ENCODE measurements at regions of chr19 and their contacts with region 1.

Region 1: DNA sequence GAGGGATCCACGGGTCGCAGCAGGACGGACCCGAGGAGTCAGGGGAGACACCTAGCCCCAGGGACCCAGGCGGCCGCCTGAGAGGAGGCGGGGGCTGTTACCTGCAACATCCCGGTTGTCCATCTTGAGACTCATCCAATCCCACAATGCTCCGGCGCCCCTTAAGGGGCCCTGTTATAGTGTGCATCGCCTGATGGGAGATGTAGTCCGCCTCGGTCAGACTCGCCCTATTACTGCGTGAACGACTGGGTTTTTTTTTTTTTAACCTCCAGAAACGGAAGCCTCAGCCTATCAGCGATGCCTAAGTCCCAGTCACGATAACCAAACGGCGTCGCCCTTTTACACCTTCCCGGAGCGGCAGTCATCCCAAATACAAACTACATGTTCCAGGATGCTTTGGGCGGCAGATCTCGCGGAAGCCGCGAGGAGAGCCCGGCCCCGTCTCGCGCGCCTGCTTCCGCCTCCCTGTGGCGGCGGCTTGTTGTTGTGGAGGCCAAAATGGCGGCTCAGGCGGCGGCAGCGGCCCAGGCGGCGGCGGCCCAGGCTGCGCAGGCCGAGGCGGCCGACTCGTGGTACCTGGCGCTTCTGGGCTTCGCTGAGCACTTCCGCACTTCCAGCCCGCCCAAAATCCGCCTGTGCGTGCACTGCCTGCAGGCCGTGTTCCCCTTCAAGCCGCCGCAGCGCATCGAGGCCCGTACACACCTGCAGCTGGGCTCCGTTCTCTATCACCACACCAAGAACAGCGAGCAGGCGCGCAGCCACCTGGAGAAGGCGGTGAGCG is at the starts of genes MAU2 and SUGP1:
- DNase-seq: peak; percentile 78 to 94 (median 91)
- ATAC-seq: peak; percentile 94
- H3K4me3 ChIP-seq: peak within 1 kb of the TSS; percentile 89
- H3K4me3 Mint-ChIP-seq: peak within 1 kb of the TSS; percentile 93 to 100 (median 98)
- H3K27ac ChIP-seq: peak within 1 kb of the TSS; percentile 95
- H3K27ac Mint-ChIP-seq: peak within 1 kb of the TSS; percentile 96 to 100 (median 99)
- H3K4me1 ChIP-seq: peaks cover 23 to 30% of the 10 kb centered on the region in 2 donors
- H3K4me1 Mint-ChIP-seq: peaks cover 20 to 66% (median 44%) of the 10 kb centered on the region in 7 donors
- H3K27me3 ChIP-seq: no peaks in the 10 kb centered on the region
- H3K27me3 Mint-ChIP-seq: no peaks in the 10 kb centered on the region
- total RNA-seq, gene MAU2: 93.7 to 170 (median 136) TPM
- total RNA-seq, gene SUGP1: 59.7 to 96.6 (median 77.5) TPM

Region 2: DNA sequence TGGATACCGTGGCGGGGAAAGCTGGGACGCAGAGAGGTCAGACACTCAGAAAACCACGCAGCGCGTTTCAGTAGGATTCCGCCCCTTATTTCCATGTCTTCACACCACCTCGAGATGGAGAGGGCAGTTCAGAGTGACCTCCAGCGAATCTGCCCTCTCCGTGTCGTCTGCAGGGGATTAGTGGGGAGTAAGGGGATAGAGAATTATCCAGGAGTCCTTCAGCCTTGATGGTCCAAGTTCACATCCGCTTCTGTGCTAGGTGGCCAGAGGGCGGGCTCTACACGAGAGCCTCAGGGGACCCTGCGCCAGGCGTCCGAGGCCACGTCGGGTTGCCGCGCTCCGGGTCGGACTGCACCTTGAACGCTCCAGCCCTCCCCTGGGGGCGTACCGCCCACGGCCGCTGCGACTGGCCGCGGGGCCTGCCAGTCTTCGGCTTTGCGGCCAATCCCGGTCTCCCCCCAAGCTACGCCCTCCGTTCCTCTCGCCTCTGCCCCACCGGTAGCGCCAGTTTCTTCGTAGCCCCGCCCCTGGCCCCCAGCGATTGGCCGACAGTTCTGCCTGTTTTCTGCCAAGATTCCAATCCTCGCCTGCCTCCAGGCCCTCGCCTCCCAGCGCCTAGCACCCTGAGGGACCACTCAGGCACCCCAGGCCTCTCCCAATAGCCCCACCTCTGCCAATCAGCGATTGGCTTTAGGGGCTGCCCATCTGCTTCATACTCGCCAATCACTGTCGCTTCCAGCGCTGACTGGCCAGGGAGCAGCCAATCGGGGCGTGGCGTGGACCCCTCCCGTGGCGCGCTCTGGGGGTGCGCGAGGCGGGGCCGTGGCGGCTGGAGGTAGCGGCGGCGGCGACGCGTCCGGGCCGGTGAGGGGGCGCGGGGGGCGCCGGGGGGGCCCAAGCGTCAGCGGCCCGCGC is 257.1 kb before region 1 on chr19 and contains the start of gene SLC25A42:
- CTCF ChIA-PET with region 1: no interaction called
- POLR2A ChIA-PET with region 1: no interaction called
- intact Hi-C with region 1: loop called (anchors 1 kb)
- DNase-seq: peak; percentile 93 to 100 (median 99)
- ATAC-seq: peak; percentile 95
- H3K4me3 ChIP-seq: peak within 1 kb of the TSS; percentile 82
- H3K4me3 Mint-ChIP-seq: peak within 1 kb of the TSS; percentile 83 to 99 (median 92)
- H3K27ac ChIP-seq: peak within 1 kb of the TSS; percentile 83
- H3K27ac Mint-ChIP-seq: peak within 1 kb of the TSS; percentile 75 to 98 (median 83)
- H3K4me1 ChIP-seq: peaks cover 11 to 15% of the 10 kb centered on the region in 2 donors
- H3K4me1 Mint-ChIP-seq: peaks cover 5 to 41% (median 35%) of the 10 kb centered on the region in 7 donors
- H3K27me3 ChIP-seq: no peaks in the 10 kb centered on the region
- H3K27me3 Mint-ChIP-seq: no peaks in the 10 kb centered on the region
- total RNA-seq, gene SLC25A42: 19.0 to 36.1 (median 21.6) TPM

Region 3: DNA sequence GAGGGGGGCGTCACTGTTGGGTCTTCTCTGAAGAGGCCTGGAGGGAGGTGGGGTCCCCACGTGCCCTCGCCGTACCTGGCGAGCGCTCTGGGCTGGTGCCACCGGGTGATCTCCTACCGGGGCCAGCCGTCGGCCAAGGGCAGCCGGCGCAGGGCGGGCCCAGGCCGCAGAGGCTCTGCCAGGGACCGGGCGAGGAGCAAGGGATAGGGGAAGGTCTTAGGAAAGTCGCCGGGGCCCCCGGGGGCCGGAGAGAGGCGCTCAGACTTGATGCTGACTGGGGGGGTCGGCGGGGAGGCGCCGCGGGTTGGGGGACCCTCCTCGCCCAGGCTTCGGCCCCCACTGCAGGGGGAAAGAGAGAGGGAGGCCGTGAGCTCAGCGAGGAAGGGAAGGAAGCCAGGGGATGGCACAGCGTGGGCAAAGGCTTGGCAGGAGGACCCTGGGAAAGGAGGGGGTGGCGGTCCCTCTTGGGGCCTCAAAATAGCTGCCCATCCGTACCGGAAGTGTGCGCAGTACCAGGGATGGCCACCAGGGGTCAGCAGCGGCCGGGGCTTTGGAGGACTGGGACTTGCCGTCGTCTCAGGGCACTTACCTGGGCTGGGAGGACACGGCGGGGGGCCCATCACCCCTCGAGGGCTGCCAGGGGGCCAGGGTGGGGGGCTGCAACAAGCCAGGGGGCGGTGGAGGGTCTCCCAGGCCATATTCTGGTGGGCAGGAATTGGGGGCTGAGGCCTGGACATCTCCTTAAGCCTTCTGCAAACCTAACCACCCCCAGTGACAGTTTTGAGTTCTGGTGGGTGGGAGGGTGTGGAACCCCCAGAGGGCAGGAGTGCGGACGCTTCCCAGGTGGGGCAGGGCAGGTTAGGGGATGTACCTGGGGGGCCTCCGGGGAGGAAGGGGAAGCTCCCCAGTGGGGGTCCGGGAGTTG is 174.6 kb before region 1 on chr19:
- CTCF ChIA-PET with region 1: no interaction called
- POLR2A ChIA-PET with region 1: no interaction called
- intact Hi-C with region 1: loop called in 1 of 2 experiments (anchors 1 kb)
- DNase-seq: peak; percentile 68 to 93 (median 80)
- ATAC-seq: peak; percentile 96
- H3K4me3 ChIP-seq: no peak overlapping the region
- H3K4me3 Mint-ChIP-seq: no peak overlapping the region
- H3K27ac ChIP-seq: no peak overlapping the region
- H3K27ac Mint-ChIP-seq: no peak overlapping the region
- H3K4me1 ChIP-seq: no peaks in the 10 kb centered on the region
- H3K4me1 Mint-ChIP-seq: no peaks in the 10 kb centered on the region
- H3K27me3 ChIP-seq: no peaks in the 10 kb centered on the region
- H3K27me3 Mint-ChIP-seq: no peaks in the 10 kb centered on the region

Region 4: DNA sequence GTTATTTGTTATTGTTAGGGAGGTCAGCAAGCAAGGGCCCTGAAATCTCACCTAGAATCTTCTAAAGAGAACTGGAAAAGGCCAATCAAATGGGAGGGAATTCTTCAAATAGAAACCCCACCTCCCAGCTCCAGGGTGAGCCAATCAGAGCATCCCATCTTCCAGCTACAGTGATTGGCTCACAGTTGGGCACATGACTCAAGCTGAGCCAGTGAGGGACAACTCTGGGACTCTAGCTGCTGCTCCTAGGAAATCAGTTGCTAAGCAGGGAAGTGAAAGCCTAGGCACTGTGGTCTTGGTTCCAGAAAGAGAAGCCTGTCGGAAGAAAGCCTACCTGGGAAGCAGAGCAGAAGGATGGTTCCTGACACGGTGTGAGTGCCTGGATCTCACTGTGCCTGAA is 60.8 kb before region 1 on chr19:
- CTCF ChIA-PET with region 1: no interaction called
- POLR2A ChIA-PET with region 1: no interaction called
- intact Hi-C with region 1: no loop called
- DNase-seq: no peak
- ATAC-seq: no peak
- H3K4me3 ChIP-seq: no peak overlapping the region
- H3K4me3 Mint-ChIP-seq: peak overlapping the region in 2 of 10 donors; percentile 8 to 12
- H3K27ac ChIP-seq: no peak overlapping the region
- H3K27ac Mint-ChIP-seq: no peak overlapping the region
- H3K4me1 ChIP-seq: no peaks in the 10 kb centered on the region
- H3K4me1 Mint-ChIP-seq: peaks cover 4 to 12% (median 9%) of the 10 kb centered on the region in 7 donors
- H3K27me3 ChIP-seq: peaks cover 6% of the 10 kb centered on the region in 2 donors
- H3K27me3 Mint-ChIP-seq: peaks cover 47 to 63% (median 51%) of the 10 kb centered on the region in 5 donors

Region 5: DNA sequence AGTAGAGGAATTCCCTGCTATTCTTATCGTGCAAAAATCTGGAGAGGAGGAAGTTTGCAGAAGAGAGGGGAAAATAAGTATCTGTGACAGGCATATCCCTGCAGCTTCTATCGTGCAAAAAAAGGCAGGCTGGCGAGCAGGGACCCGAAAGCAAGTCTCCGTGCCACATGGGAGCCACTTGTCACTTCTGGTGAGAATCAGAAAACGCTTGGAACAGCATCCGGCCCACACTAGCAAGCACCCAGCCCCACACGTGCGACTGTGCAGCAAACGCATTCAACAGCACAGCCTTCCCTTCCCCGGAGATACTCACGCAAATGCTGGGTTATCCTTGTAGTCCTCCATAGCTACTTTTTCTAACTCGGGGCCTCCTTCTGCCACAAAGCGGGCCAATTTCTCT is 17.1 kb before region 1 on chr19:
- CTCF ChIA-PET with region 1: no interaction called
- POLR2A ChIA-PET with region 1: no interaction called
- intact Hi-C with region 1: no loop called
- DNase-seq: no peak
- ATAC-seq: no peak
- H3K4me3 ChIP-seq: no peak overlapping the region
- H3K4me3 Mint-ChIP-seq: no peak overlapping the region
- H3K27ac ChIP-seq: no peak overlapping the region
- H3K27ac Mint-ChIP-seq: no peak overlapping the region
- H3K4me1 ChIP-seq: no peaks in the 10 kb centered on the region
- H3K4me1 Mint-ChIP-seq: no peaks in the 10 kb centered on the region
- H3K27me3 ChIP-seq: no peaks in the 10 kb centered on the region
- H3K27me3 Mint-ChIP-seq: no peaks in the 10 kb centered on the region

Region 6: DNA sequence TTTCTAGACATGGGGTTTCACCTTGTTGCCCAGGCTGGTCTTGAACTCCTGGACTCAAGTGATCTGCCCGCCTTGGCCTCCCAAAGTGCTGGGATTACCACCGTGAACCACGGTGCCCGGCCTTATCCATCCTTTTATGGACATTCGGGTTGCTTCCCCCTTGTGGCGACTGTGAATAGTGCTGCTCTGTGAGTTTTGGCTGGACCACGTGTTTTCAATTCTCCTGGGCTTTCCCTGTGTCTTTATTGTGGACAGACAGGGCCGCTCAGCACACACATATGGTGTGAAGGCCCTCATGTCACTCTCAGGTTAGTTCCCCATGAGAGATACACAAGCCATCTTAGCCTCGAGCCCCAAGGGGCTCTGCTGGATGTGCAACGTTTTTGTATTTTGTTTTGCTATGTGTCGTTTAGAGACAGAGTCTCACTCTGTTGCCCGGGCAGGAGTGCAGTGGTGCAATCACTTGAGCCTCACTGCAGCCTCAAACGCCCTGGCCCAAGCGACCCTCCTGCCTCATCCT is 40.6 kb after region 1 on chr19:
- CTCF ChIA-PET with region 1: interaction called, 3 read pairs
- POLR2A ChIA-PET with region 1: interaction called, 5 read pairs
- intact Hi-C with region 1: loop called (anchors 1 to 2 kb)
- DNase-seq: peak; percentile 40 to 70 (median 57)
- ATAC-seq: peak; percentile 79
- H3K4me3 ChIP-seq: no peak overlapping the region
- H3K4me3 Mint-ChIP-seq: peak overlapping the region in 8 of 10 donors; percentile 7 to 73 (median 54)
- H3K27ac ChIP-seq: no peak overlapping the region
- H3K27ac Mint-ChIP-seq: peak overlapping the region in 8 of 9 donors; percentile 5 to 78 (median 68)
- H3K4me1 ChIP-seq: peaks cover 15 to 21% of the 10 kb centered on the region in 2 donors
- H3K4me1 Mint-ChIP-seq: peaks cover 18 to 51% (median 35%) of the 10 kb centered on the region in 7 donors
- H3K27me3 ChIP-seq: no peaks in the 10 kb centered on the region
- H3K27me3 Mint-ChIP-seq: no peaks in the 10 kb centered on the region

Region 7: DNA sequence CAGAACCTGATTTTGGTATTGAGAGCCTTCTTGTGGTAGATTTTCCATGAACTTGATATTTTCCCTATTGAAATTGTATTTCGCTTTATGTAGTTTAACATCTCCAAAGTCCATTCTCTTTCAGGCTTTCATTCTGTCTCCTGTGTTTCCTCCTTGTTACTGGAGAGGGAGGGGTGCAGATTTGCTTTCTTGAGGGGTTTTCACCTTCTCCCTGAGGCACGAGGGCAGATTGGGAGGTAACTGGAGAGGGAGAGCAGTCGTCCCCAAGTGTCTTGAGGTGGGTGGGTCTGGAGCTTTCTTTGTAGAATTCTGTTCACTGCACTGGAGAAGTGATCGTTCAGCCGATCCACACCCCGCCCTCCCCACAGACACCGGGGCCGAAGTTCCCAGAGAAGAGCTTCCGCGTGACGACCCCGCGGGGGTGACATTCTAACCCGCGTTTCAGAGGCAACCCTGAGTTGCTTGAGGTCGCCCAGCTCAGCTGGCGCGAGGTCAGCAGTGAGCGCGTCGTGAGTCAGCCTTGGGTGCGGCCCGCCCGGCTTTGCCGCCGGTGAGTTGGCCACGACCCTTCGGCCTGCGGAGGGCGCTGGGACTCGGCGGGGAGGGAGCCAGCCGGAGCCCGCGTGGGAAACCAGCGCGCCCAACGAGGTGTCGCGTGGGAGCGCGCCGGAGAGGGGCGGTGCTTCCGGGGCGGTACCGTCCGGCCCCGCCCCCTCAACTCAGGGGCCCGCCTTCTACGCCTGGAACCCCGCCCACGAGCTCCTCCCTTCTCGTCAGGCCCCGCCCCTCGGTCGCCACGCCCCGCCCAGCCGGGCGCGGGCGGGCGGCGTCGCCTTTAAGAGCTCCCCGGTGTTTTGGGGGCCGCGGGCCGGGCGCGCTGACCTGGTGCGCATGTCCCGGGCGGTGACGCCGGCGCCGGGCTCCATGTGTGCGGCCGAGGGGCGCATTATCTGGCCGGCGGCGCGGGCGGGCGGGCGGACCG is 84.6 kb after region 1 on chr19 and contains the start of gene GATAD2A:
- CTCF ChIA-PET with region 1: no interaction called
- POLR2A ChIA-PET with region 1: interaction called, 3 read pairs
- intact Hi-C with region 1: loop called (anchors 1 kb)
- DNase-seq: peak; percentile 85 to 99 (median 90)
- ATAC-seq: peak; percentile 96
- H3K4me3 ChIP-seq: peak within 1 kb of the TSS; percentile 65
- H3K4me3 Mint-ChIP-seq: peak within 1 kb of the TSS; percentile 89 to 97 (median 94)
- H3K27ac ChIP-seq: peak within 1 kb of the TSS; percentile 86
- H3K27ac Mint-ChIP-seq: peak within 1 kb of the TSS; percentile 86 to 98 (median 92)
- H3K4me1 ChIP-seq: peaks cover 26 to 38% of the 10 kb centered on the region in 2 donors
- H3K4me1 Mint-ChIP-seq: peaks cover 37 to 70% (median 66%) of the 10 kb centered on the region in 7 donors
- H3K27me3 ChIP-seq: no peaks in the 10 kb centered on the region
- H3K27me3 Mint-ChIP-seq: no peaks in the 10 kb centered on the region
- total RNA-seq, gene GATAD2A: 97.9 to 123 (median 116) TPM

Region 8: GRCh38 chr19:19515764-19516519 is 195.4 kb after region 1 on chr19 and contains the start of gene NDUFA13:
- CTCF ChIA-PET with region 1: no interaction called
- POLR2A ChIA-PET with region 1: no interaction called
- intact Hi-C with region 1: loop called (anchors 1 kb)
- DNase-seq: peak; percentile 88 to 98 (median 92)
- ATAC-seq: peak; percentile 96
- H3K4me3 ChIP-seq: peak within 1 kb of the TSS; percentile 96
- H3K4me3 Mint-ChIP-seq: peak within 1 kb of the TSS; percentile 89 to 98 (median 95)
- H3K27ac ChIP-seq: peak within 1 kb of the TSS; percentile 83
- H3K27ac Mint-ChIP-seq: peak within 1 kb of the TSS; percentile 89 to 98 (median 96)
- H3K4me1 ChIP-seq: peaks cover 13 to 14% of the 10 kb centered on the region in 2 donors
- H3K4me1 Mint-ChIP-seq: peaks cover 16 to 42% (median 27%) of the 10 kb centered on the region in 7 donors
- H3K27me3 ChIP-seq: no peaks in the 10 kb centered on the region
- H3K27me3 Mint-ChIP-seq: no peaks in the 10 kb centered on the region
- total RNA-seq, gene NDUFA13: 172 to 362 (median 176) TPM

Measured in naive thymus-derived CD4-positive, alpha-beta T cell (primary cell).